Activated CD8-positive, alpha-beta T cell treated with anti-CD3 and anti-CD28 coated beads, Interleukin-2, amount 10 ng/mL, durations not matched to agents 7 days and 5 days (primary cell): ENCODE measurements at regions of chr22 and their contacts with region 1.

Region 1: GRCh38 chr22:40436505-40437451 is 66.4 kb downstream of the SGSM3 start:
- DNase-seq: peak; percentile 41
- ATAC-seq: peak; percentile 66
- H3K4me3 Mint-ChIP-seq: peak overlapping the region; percentile 27
- H3K27ac Mint-ChIP-seq: peak overlapping the region; percentile 81
- H3K4me1 Mint-ChIP-seq: peaks cover 54% of the 10 kb centered on the region
- H3K27me3 Mint-ChIP-seq: no peaks in the 10 kb centered on the region

Region 2: DNA sequence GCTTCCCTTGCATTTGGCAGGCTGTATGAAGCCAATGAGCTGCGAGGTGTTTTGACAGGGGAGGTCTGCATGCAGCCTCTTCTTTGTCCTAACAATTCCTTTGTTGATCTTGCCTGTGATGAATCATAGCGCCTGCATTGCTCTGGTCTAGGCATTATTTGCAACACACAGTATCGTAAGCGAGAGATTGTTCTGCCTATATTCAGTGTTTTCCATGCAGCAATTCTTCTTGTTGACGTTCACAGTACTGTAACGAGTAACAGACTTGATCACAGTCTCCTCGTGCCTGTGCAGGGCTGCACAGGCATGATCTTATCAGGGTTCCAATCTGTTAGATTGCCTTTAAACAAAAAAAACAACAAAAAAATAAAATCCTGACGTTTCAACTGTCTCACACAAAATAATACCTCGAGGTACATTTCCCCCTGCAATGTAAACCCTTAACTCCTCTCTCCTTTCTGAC is 104.4 kb before region 1 on chr22:
- CTCF ChIA-PET with region 1: no interaction called
- POLR2A ChIA-PET with region 1: no interaction called
- DNase-seq: no peak
- ATAC-seq: peak; percentile 35
- H3K4me3 Mint-ChIP-seq: peak overlapping the region; percentile 51
- H3K27ac Mint-ChIP-seq: peak overlapping the region; percentile 35
- H3K4me1 Mint-ChIP-seq: peaks cover 87% of the 10 kb centered on the region
- H3K27me3 Mint-ChIP-seq: no peaks in the 10 kb centered on the region

Region 3: GRCh38 chr22:40385036-40385782 is 51.6 kb before region 1 on chr22:
- CTCF ChIA-PET with region 1: interaction called, 15 read pairs
- POLR2A ChIA-PET with region 1: no interaction called
- DNase-seq: peak; percentile 63
- ATAC-seq: peak; percentile 84
- H3K4me3 Mint-ChIP-seq: peak overlapping the region; percentile 71
- H3K27ac Mint-ChIP-seq: peak overlapping the region; percentile 95
- H3K4me1 Mint-ChIP-seq: peaks cover 45% of the 10 kb centered on the region
- H3K27me3 Mint-ChIP-seq: no peaks in the 10 kb centered on the region

Region 4: DNA sequence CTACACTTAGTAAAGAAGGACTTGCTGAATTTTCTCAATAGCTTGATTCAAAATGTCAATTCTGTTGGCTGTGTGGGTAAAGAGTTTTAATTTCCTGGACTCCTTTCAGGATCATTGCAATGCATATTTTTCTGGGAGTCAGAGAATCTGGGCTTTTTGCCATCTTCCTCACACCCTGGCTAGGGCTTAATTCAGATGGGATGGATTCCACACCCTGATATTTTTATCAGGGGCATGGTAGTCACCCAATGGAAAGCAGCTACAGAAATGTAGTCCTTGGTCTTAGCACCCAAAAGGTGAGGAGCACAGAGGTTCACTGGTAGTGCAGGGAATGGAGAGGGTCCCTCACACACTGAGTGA is 12.9 kb after region 1 on chr22:
- CTCF ChIA-PET with region 1: interaction called, 54 read pairs
- POLR2A ChIA-PET with region 1: no interaction called
- DNase-seq: no peak
- ATAC-seq: no peak
- H3K4me3 Mint-ChIP-seq: no peak overlapping the region
- H3K27ac Mint-ChIP-seq: no peak overlapping the region
- H3K4me1 Mint-ChIP-seq: peaks cover 47% of the 10 kb centered on the region
- H3K27me3 Mint-ChIP-seq: no peaks in the 10 kb centered on the region

Region 5: DNA sequence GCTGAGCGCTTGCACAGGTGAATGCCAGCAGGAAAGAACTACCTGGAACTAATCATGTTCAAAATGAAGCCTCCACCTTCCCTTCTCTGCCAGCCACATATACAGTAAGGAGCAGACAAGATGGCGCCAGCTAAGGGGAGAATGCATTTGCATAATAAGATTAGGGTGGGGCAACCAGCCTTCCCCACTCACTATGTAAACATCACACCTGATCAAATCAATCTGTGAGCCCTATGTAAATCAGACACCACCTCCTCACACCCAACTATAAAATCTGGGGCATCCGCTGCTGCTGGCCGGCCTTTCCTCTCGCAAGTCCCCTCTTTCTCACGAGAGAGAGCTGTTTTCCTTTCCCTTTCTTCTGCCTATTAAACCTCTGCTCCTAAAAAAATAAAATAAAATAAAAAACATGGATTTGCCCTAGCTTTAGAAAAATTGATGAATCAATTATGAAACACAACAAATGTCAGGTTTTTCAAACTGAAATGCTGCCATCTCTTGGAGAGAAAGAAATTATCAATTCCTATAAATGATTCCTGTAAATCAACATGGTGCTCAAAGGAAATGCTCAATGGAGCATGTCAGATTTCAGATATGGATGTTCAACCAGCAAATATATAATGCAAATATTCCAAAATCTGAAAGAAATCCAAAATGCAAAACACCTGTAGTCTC is 42.5 kb after region 1 on chr22:
- CTCF ChIA-PET with region 1: interaction called, 24 read pairs
- POLR2A ChIA-PET with region 1: interaction called, 3 read pairs
- DNase-seq: no peak
- ATAC-seq: no peak
- H3K4me3 Mint-ChIP-seq: no peak overlapping the region
- H3K27ac Mint-ChIP-seq: no peak overlapping the region
- H3K4me1 Mint-ChIP-seq: peaks cover 44% of the 10 kb centered on the region
- H3K27me3 Mint-ChIP-seq: no peaks in the 10 kb centered on the region

Region 6: GRCh38 chr22:40519284-40519947 is 82.6 kb after region 1 on chr22:
- CTCF ChIA-PET with region 1: interaction called, 30 read pairs
- POLR2A ChIA-PET with region 1: no interaction called
- DNase-seq: no peak
- ATAC-seq: peak; percentile 94
- H3K4me3 Mint-ChIP-seq: peak overlapping the region; percentile 68
- H3K27ac Mint-ChIP-seq: peak overlapping the region; percentile 88
- H3K4me1 Mint-ChIP-seq: peaks cover 26% of the 10 kb centered on the region
- H3K27me3 Mint-ChIP-seq: no peaks in the 10 kb centered on the region

Region 7: GRCh38 chr22:40547729-40548172 is 111.0 kb after region 1 on chr22:
- CTCF ChIA-PET with region 1: no interaction called
- POLR2A ChIA-PET with region 1: no interaction called
- DNase-seq: no peak
- ATAC-seq: no peak
- H3K4me3 Mint-ChIP-seq: no peak overlapping the region
- H3K27ac Mint-ChIP-seq: no peak overlapping the region
- H3K4me1 Mint-ChIP-seq: peaks cover 4% of the 10 kb centered on the region
- H3K27me3 Mint-ChIP-seq: no peaks in the 10 kb centered on the region

Region 8: DNA sequence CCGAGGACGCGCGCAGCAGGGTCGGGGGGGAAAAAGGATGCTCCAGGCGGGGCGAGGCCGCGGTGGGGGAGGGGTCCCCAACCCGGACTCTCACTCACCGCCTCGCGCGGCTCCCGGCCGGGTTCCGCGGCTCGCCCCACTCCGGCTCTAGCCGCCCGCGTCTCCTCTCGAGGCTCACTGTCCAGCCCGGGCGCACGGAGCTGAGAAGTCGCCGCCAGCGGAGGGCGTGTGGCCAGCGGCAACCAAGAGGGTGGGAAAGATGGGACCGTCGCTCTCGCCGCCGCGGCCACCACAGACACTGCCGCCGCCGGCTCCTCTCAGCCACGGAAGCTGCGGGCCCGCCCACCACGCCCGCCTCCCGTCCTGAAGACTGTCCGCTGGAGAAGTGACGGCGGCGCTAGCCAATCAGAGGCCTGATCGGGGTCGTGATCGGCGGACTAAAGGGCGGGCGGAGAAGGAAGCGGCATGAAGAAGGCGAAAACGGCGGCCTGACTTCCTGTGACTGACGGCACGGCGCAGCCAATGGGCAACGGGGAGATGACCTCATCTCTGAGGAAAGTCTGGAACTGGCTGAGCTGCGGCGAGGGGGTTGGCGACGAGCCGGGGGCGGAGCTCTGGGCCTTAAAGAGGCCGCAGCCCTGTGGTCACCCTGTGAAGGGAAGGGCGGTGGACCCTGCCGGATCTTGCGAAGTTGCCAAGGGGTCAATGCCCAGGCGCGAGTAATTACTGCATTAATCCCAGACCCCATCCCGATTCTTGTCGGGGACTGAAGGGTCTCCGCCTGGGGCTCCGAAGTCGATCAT is 199.8 kb after region 1 on chr22 and contains the start of gene MRTFA:
- CTCF ChIA-PET with region 1: interaction called, 18 read pairs
- POLR2A ChIA-PET with region 1: interaction called, 3 read pairs
- DNase-seq: peak; percentile 100
- ATAC-seq: peak; percentile 97
- H3K4me3 Mint-ChIP-seq: peak within 1 kb of the TSS; percentile 94
- H3K27ac Mint-ChIP-seq: peak within 1 kb of the TSS; percentile 96
- H3K4me1 Mint-ChIP-seq: peaks cover 25% of the 10 kb centered on the region
- H3K27me3 Mint-ChIP-seq: no peaks in the 10 kb centered on the region
- total RNA-seq, gene MRTFA: 65.0 to 65.1 TPM

Region 9: GRCh38 chr22:40898850-40899357 is 462.1 kb after region 1 on chr22:
- CTCF ChIA-PET with region 1: interaction called, 19 read pairs
- POLR2A ChIA-PET with region 1: no interaction called
- DNase-seq: peak; percentile 24
- ATAC-seq: peak; percentile 33
- H3K4me3 Mint-ChIP-seq: no peak overlapping the region
- H3K27ac Mint-ChIP-seq: no peak overlapping the region
- H3K4me1 Mint-ChIP-seq: peaks cover 8% of the 10 kb centered on the region
- H3K27me3 Mint-ChIP-seq: no peaks in the 10 kb centered on the region